ENCODE measurements at regions of chr4 and their contacts with region 1.

Region 1: GRCh38 chr4:183659029-183659871 is at the starts of genes RWDD4 and TRAPPC11:
- DNase-seq: peak; percentile 90 to 99 (median 95)
- ATAC-seq: peak; percentile 96
- H3K4me3 ChIP-seq: peak within 1 kb of the TSS; percentile 72 to 83
- H3K4me3 Mint-ChIP-seq: peak within 1 kb of the TSS; percentile 92
- H3K27ac ChIP-seq: peak within 1 kb of the TSS; percentile 83 to 89
- H3K27ac Mint-ChIP-seq: peak within 1 kb of the TSS; percentile 91
- H3K4me1 ChIP-seq: peaks cover 25% of the 10 kb centered on the region
- H3K4me1 Mint-ChIP-seq: peaks cover 42% of the 10 kb centered on the region
- H3K27me3 ChIP-seq: no peaks in the 10 kb centered on the region
- H3K27me3 Mint-ChIP-seq: no peaks in the 10 kb centered on the region
- CTCF ChIP-seq: no peak
- total RNA-seq, gene RWDD4: 9.0 to 12.1 TPM
- total RNA-seq, gene TRAPPC11: 14.7 to 22.1 TPM

Region 2: DNA sequence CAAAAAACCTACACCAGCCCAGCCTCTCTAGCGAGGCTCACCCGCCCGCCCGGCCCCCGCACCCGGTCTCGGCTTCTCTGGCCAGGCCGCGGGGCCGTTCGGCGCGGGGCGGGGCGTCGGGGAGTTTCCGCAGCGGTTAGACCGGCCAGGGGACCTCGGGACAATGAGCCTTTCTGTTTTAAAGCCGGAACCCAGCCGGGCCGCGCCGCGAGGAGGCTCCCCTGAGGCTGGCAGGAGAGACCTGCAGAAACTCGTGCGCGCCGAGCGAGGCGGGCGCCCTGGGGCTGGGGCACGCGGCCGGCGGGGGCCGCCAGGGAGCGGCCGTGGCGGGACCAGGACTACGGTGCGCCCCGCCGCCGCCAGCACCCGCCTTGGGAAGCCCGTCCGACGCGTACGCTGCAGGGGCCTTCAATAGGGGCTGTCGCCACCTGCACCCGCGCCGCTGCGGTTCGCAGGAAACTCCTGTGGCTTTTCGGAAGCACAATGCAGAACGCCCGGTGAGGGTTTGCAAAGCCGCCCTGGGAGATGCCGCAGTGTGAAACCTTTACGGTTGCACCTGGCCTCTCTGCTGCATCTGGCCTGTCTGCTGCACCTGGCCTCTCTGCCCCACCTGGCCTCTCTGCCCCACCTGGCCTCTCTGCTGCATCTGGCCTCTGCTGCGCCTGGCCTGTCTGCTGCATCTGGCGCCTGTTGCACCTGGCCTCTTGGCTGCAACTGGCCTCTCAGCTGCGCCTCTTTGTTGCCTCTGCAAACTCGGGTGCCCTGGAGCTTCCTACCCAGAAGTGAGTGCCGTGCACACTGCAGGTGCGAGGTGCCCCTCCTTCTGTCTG is 63.7 kb after region 1 on chr4:
- CTCF ChIA-PET with region 1: no interaction called
- POLR2A ChIA-PET with region 1: no interaction called
- intact Hi-C with region 1: loop called in 1 of 2 experiments (anchors 2 kb)
- DNase-seq: peak; percentile 7 to 73 (median 44)
- ATAC-seq: peak; percentile 51
- H3K4me3 ChIP-seq: peak overlapping the region; percentile 20 to 57
- H3K4me3 Mint-ChIP-seq: peak overlapping the region; percentile 88
- H3K27ac ChIP-seq: no peak overlapping the region
- H3K27ac Mint-ChIP-seq: peak overlapping the region; percentile 80
- H3K4me1 ChIP-seq: peaks cover 7% of the 10 kb centered on the region
- H3K4me1 Mint-ChIP-seq: peaks cover 13% of the 10 kb centered on the region
- H3K27me3 ChIP-seq: no peaks in the 10 kb centered on the region
- H3K27me3 Mint-ChIP-seq: no peaks in the 10 kb centered on the region
- CTCF ChIP-seq: no peak